CD8-positive, alpha-beta memory T cell (primary cell): ENCODE measurements at regions of chr9 and their contacts with region 1.

Region 1: GRCh38 chr9:129221233-129221632 is 43.2 kb upstream of the IER5L start:
- DNase-seq: peak in 4 of 5 donors; percentile 13 to 78 (median 34)
- H3K4me3 ChIP-seq: no peak overlapping the region
- H3K4me3 Mint-ChIP-seq: peak overlapping the region in 6 of 7 donors; percentile 59 to 89 (median 73)
- H3K27ac ChIP-seq: no peak overlapping the region
- H3K27ac Mint-ChIP-seq: peak overlapping the region; percentile 15 to 84 (median 74)
- H3K4me1 ChIP-seq: peaks cover 31% of the 10 kb centered on the region
- H3K4me1 Mint-ChIP-seq: peaks cover 35 to 54% (median 41%) of the 10 kb centered on the region in 3 donors
- H3K27me3 ChIP-seq: no peaks in the 10 kb centered on the region
- H3K27me3 Mint-ChIP-seq: no peaks in the 10 kb centered on the region

Region 2: DNA sequence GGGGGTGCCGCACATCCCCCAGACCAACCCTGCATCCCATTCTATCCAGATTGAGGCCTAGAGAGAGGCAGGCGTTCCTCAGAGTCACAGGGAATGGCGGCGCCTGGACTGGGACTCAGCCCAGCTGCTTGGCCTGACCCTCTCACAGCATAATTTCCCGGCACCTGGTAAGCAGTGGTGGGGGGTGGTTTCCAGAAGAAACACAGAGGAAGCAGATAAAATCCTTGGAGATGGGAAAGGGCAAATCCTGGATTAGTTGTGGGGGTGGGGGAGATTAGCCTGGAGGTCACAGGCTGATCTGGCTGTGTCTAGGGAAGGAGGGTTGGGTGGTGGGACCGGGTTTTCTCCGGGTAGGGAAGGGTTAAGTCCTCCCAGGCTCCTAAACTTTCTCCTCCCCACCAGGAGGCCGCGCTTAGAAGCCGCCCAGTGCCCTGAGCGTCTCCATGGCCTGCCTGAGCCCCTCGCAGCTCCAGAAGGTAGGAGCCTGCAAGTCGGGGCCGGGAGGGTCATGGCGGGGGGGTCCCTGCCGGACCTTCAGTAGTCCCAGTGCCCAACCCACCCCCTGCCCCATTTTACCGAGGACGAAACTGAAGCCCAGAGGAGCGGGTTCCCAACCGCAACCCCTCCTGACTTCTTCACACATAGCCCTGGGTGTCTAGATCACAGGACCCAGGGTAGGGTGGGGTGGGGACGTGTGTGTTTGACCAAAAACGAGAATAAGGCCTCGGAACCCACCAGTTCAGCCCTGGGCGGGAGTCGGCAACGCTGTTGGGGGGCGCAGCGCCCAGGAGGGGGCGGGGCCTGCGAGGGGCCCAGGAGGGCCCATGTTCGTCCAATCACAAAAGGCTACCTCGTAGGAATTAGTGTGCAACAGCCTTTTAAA is 299.1 kb before region 1 on chr9:
- CTCF ChIA-PET with region 1: no interaction called
- POLR2A ChIA-PET with region 1: no interaction called
- DNase-seq: peak in 1 of 5 donors; percentile 46
- H3K4me3 ChIP-seq: no peak overlapping the region
- H3K4me3 Mint-ChIP-seq: peak overlapping the region in 4 of 7 donors; percentile 1 to 51 (median 30)
- H3K27ac ChIP-seq: no peak overlapping the region
- H3K27ac Mint-ChIP-seq: peak overlapping the region in 3 of 8 donors; percentile 47 to 82 (median 63)
- H3K4me1 ChIP-seq: no peaks in the 10 kb centered on the region
- H3K4me1 Mint-ChIP-seq: peaks cover 1 to 11% (median 5%) of the 10 kb centered on the region in 3 donors
- H3K27me3 ChIP-seq: no peaks in the 10 kb centered on the region
- H3K27me3 Mint-ChIP-seq: no peaks in the 10 kb centered on the region

Region 3: DNA sequence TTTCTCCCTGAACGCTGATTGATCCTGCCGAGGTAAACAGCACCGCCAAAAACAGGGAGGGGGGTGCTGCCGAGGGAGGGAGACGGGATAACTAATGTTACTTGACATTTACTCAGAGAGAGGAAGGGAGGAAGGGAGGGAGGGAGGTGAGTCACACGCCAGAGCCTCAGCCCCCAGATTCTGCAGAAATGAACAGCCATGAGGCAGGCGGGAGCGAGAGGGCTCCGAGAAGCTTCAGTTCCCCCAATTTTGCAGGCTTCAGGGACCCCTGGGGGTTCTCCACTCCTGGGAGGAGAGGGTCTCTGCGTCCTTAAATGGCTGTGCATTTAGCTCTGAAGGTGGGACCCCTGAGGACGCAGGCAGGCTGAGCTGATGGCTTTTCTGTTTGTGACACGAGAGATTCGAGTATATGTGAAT is 16.0 kb after region 1 on chr9:
- CTCF ChIA-PET with region 1: interaction called, 33 read pairs
- POLR2A ChIA-PET with region 1: interaction called, 10 read pairs
- DNase-seq: peak in 3 of 5 donors; percentile 3 to 66 (median 52)
- H3K4me3 ChIP-seq: peak overlapping the region; percentile 54
- H3K4me3 Mint-ChIP-seq: peak overlapping the region; percentile 84 to 94 (median 90)
- H3K27ac ChIP-seq: peak overlapping the region; percentile 41
- H3K27ac Mint-ChIP-seq: peak overlapping the region; percentile 77 to 97 (median 91)
- H3K4me1 ChIP-seq: peaks cover 45% of the 10 kb centered on the region
- H3K4me1 Mint-ChIP-seq: peaks cover 57 to 81% (median 67%) of the 10 kb centered on the region in 3 donors
- H3K27me3 ChIP-seq: no peaks in the 10 kb centered on the region
- H3K27me3 Mint-ChIP-seq: peaks cover 0 to 1% of the 10 kb centered on the region in 2 donors

Region 4: GRCh38 chr9:129320575-129321263 is 99.5 kb after region 1 on chr9:
- CTCF ChIA-PET with region 1: interaction called, 13 read pairs
- POLR2A ChIA-PET with region 1: interaction called, 9 read pairs
- DNase-seq: peak; percentile 8 to 76 (median 57)
- H3K4me3 ChIP-seq: peak overlapping the region; percentile 53
- H3K4me3 Mint-ChIP-seq: peak overlapping the region; percentile 30 to 84 (median 82)
- H3K27ac ChIP-seq: peak overlapping the region; percentile 11
- H3K27ac Mint-ChIP-seq: peak overlapping the region in 6 of 8 donors; percentile 56 to 93 (median 90)
- H3K4me1 ChIP-seq: peaks cover 17% of the 10 kb centered on the region
- H3K4me1 Mint-ChIP-seq: peaks cover 9 to 16% (median 11%) of the 10 kb centered on the region in 3 donors
- H3K27me3 ChIP-seq: no peaks in the 10 kb centered on the region
- H3K27me3 Mint-ChIP-seq: peaks cover 0 to 3% of the 10 kb centered on the region in 2 donors